ENCODE measurements at regions of chr7 and their contacts with region 1.

Region 1: GRCh38 chr7:31122649-31123058 is 70.5 kb downstream of the ADCYAP1R1 start:
- DNase-seq: peak; percentile 67 to 93
- H3K4me3 ChIP-seq: no peak overlapping the region
- H3K27ac ChIP-seq: no peak overlapping the region
- H3K4me1 ChIP-seq: peaks cover 4 to 21% (median 13%) of the 10 kb centered on the region in 4 donors
- H3K27me3 ChIP-seq: no peaks in the 10 kb centered on the region
- CTCF ChIP-seq: peak in 5 of 7 experiments; percentile 44 to 79 (median 64)
- EP300 ChIP-seq: no peak
- POLR2A ChIP-seq: no peak

Region 2: GRCh38 chr7:30800785-30801252 is 321.8 kb before region 1 on chr7:
- intact Hi-C with region 1: loop called (anchors 10 kb)
- DNase-seq: peak; percentile 52 to 91
- H3K4me3 ChIP-seq: no peak overlapping the region
- H3K27ac ChIP-seq: peak overlapping the region in 2 of 5 donors; percentile 22 to 67
- H3K4me1 ChIP-seq: peaks cover 0 to 69% (median 47%) of the 10 kb centered on the region in 4 donors
- H3K27me3 ChIP-seq: no peaks in the 10 kb centered on the region
- CTCF ChIP-seq: peak in 5 of 7 experiments; percentile 36 to 69 (median 57)
- EP300 ChIP-seq: no peak
- POLR2A ChIP-seq: no peak

Region 3: DNA sequence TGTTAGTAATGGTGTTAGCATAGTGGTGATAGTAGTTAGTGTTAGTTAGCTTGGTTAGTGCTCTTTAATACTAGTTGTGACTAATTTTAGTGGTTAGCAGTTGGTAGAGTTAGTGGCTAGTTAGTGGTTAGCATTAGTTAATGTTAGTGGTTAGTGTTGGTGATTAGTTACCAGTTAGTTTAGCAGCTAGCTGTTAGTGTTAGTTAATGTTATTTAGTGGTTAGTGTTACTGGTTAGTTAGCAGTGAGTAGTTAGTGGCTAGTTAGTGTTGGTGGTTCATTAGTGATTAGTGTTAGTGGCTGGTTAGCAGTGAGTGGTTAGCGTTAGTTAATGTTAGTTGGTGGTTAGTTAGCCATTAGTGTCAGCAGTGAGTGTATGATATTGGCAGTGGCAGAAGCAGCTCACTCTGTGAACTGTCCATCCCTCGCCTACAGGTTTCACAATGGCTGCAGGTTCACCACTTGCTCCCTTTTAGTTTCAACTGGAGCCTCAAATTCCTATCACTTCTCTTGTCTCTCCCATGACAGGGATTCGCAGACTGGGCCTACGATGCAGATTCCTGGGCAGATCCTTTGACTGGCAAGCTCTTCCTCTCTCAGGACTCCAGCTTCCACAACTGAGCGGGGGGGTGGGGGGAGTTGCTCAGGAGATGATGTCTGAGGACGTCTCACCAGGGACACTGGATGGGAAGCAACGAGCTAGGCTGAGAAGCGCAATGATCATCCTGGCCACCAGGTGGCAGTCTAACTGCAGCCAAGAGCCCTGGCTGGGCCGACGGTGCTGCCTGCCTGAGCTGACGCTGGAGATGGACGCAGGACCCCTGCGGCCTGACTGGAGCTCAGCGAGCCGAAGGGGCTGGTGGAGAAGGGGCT is 139.4 kb before region 1 on chr7:
- intact Hi-C with region 1: loop called (anchors 5 kb)
- DNase-seq: peak; percentile 85 to 95
- H3K4me3 ChIP-seq: peak overlapping the region in 1 of 4 donors; percentile 16
- H3K27ac ChIP-seq: no peak overlapping the region
- H3K4me1 ChIP-seq: peaks cover 0 to 14% (median 7%) of the 10 kb centered on the region in 4 donors
- H3K27me3 ChIP-seq: peaks cover 0 to 44% (median 0%) of the 10 kb centered on the region in 3 donors
- CTCF ChIP-seq: peak in 5 of 7 experiments; percentile 75 to 96 (median 90)
- EP300 ChIP-seq: no peak
- POLR2A ChIP-seq: no peak

Measured in stomach (tissue), 19 donors.